Activated T-helper 1 cell treated with anti-CD3 and anti-CD28 coated beads, Interleukin-12 subunit alpha, Interleukin-12 subunit beta, Interleukin-2, Interleukin-4 antibody, amounts not matched to agents 30 ng/mL and 10 ng/mL and 1 ng/mL, durations not matched to agents 14 hours and 24 hours and 36 hours (primary cell): ENCODE measurements at regions of chr6 and their contacts with region 1.

Region 1: DNA sequence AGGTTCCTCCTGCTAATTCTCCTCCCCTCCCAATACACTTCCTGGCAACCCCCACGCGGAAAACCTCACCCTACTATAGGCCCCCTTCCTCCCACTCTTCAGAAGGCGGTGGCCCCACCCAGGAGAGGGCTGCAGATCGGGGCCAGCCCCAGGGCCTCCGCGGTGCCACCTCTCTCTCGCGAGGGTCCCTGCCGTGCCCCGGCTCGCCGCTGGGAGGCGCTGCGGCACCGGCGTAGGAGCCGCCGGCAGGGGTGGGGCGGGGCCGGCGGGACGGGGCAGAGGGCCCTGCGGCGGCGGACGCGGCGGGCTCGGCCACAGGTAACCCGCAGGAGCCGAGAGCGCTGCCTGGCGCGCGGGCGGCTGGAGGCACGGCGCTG is at the start of gene ANKRD6:
- DNase-seq: peak; percentile 80
- H3K4me3 Mint-ChIP-seq: peak within 1 kb of the TSS; percentile 87
- H3K27ac Mint-ChIP-seq: peak within 1 kb of the TSS; percentile 70
- H3K4me1 Mint-ChIP-seq: peaks cover 18% of the 10 kb centered on the region
- H3K27me3 Mint-ChIP-seq: peaks cover 32% of the 10 kb centered on the region
- total RNA-seq, gene ANKRD6: 1.3 and 2.3 TPM in 2 replicates

Region 2: DNA sequence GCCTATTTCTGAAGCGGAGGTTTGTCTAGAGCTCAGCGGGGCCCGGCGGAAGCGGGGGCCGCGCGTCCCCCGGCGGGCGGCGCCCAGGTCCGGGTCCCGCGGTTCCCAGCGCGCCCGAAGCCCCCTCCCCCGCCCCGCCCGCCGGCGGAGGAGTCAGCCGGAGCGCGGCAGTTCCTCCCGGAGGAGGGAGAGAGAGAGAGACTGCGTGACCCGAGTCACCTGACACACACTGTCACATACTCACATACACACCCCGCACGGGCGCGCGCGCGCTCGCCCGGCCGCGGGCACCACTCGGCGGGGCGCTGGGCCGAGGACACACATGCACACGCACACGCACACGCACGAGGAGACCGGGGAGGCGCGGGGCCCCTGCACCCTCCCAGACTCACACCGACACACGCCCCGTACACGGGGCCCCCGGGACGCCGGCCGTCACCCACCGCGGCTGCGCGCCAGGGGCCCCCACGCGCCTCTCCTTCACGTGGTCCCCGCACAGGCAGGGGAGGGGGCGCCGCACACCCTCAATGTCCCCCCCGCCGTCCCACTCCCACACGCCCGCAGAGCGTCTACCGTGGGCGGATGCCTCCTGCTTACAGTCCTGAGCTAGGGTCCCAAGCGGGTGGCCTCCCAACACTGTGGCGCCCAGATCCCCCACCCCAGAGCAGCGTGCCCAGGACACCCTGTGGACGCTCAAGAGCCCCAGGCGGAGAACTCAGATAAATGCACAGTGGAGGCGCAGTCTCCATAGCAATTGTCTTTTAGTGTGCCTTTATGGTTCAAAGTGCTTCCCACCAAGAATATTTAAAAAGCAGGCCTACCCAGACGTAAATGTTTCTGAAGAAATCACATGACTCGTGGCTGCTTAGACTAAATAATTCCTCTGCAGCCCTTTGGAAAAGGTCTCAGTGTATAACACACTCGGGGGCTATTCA is 20.5 kb before region 1 on chr6 and contains the start of gene RRAGD:
- intact Hi-C with region 1: loop called (anchors 1 kb)
- DNase-seq: peak; percentile 49
- H3K4me3 Mint-ChIP-seq: peak within 1 kb of the TSS; percentile 95
- H3K27ac Mint-ChIP-seq: peak within 1 kb of the TSS; percentile 94
- H3K4me1 Mint-ChIP-seq: peaks cover 25% of the 10 kb centered on the region
- H3K27me3 Mint-ChIP-seq: peaks cover 50% of the 10 kb centered on the region
- total RNA-seq, gene RRAGD: 7.8 and 10.1 TPM in 2 replicates

Region 3: DNA sequence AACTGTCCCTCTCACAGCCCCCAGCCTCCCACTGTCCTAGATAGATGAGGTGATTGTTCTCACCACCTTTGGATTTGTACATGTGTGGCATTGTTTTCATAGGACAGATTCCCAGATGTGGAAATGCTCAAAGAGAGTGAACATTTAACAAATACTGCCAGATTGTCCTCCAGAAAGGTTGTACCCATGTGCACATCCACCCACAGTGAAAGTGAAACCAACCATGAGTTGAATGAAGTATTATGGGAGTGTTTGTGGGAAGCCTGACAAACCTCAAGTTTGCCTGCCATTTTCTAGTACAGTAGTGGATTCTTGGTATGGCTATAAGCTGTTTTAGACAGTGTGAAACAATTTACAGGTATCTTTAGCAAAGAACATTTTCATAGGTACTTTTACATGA is 42.8 kb after region 1 on chr6:
- intact Hi-C with region 1: loop called (anchors 5 kb)
- DNase-seq: peak; percentile 38
- H3K4me3 Mint-ChIP-seq: peak overlapping the region; percentile 5
- H3K27ac Mint-ChIP-seq: peak overlapping the region; percentile 37
- H3K4me1 Mint-ChIP-seq: peaks cover 27% of the 10 kb centered on the region
- H3K27me3 Mint-ChIP-seq: peaks cover 3% of the 10 kb centered on the region

Region 4: GRCh38 chr6:89610149-89610642 is 177.3 kb after region 1 on chr6:
- intact Hi-C with region 1: loop called (anchors 1 kb)
- DNase-seq: peak; percentile 65
- H3K4me3 Mint-ChIP-seq: no peak overlapping the region
- H3K27ac Mint-ChIP-seq: no peak overlapping the region
- H3K4me1 Mint-ChIP-seq: peaks cover 15% of the 10 kb centered on the region
- H3K27me3 Mint-ChIP-seq: peaks cover 2% of the 10 kb centered on the region